ENCODE measurements at regions of chr1 and their contacts with region 1.

Region 1: GRCh38 chr1:40508375-40509341 is at the start of gene EXO5:
- H3K4me3 Mint-ChIP-seq: peak within 1 kb of the TSS; percentile 85
- H3K27ac Mint-ChIP-seq: peak within 1 kb of the TSS; percentile 91
- H3K4me1 Mint-ChIP-seq: peaks cover 9% of the 10 kb centered on the region
- H3K27me3 Mint-ChIP-seq: no peaks in the 10 kb centered on the region

Region 2: GRCh38 chr1:40462956-40463590 is 45.6 kb before region 1 on chr1:
- intact Hi-C with region 1: loop called (anchors 5 kb)
- H3K4me3 Mint-ChIP-seq: no peak overlapping the region
- H3K27ac Mint-ChIP-seq: no peak overlapping the region
- H3K4me1 Mint-ChIP-seq: no peaks in the 10 kb centered on the region
- H3K27me3 Mint-ChIP-seq: no peaks in the 10 kb centered on the region

Region 3: GRCh38 chr1:40477678-40478053 is 31.0 kb before region 1 on chr1:
- intact Hi-C with region 1: loop called (anchors 2 kb)
- H3K4me3 Mint-ChIP-seq: peak overlapping the region; percentile 84
- H3K27ac Mint-ChIP-seq: peak overlapping the region; percentile 89
- H3K4me1 Mint-ChIP-seq: peaks cover 23% of the 10 kb centered on the region
- H3K27me3 Mint-ChIP-seq: peaks cover 2% of the 10 kb centered on the region

Region 4: GRCh38 chr1:41023279-41023990 is 514.8 kb after region 1 on chr1:
- intact Hi-C with region 1: no loop called
- H3K4me3 Mint-ChIP-seq: no peak overlapping the region
- H3K27ac Mint-ChIP-seq: no peak overlapping the region
- H3K4me1 Mint-ChIP-seq: no peaks in the 10 kb centered on the region
- H3K27me3 Mint-ChIP-seq: no peaks in the 10 kb centered on the region

Measured in dendritic cell treated with granulocyte-macrophage colony-stimulating factor and Interleukin-4, amounts not matched to agents 40 ng/mL and 50 ng/mL, for 4 days (primary cell).